ENCODE measurements at regions of chr6 and their contacts with region 1.

Region 1: DNA sequence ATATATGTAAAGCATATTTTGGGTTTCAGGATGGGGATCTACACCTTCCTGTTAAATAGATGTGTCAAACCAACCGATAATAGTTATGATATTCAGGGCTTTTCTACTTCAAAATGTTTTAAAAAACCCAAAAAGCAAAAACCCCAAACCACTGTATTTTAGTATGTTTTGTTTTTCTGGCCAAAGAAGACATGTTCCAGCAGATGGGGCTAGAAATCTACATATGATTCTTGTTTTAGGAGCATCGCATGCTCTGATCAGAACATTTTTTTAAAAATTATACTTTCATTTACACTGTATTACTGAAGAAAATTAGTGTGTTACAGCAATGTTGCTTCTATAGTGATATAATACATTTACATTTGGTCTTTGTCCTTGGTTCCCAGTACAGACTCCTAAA is 11.0 kb downstream of the RMND1 start:
- DNase-seq: peak; percentile 61 to 78 (median 76)
- H3K4me3 ChIP-seq: no peak overlapping the region
- H3K27ac ChIP-seq: no peak overlapping the region
- H3K4me1 ChIP-seq: peaks cover 0 to 4% (median 0%) of the 10 kb centered on the region in 4 experiments
- H3K27me3 ChIP-seq: no peaks in the 10 kb centered on the region

Region 2: GRCh38 chr6:151323791-151324487 is 117.0 kb before region 1 on chr6:
- CTCF ChIA-PET with region 1: no interaction called
- POLR2A ChIA-PET with region 1: no interaction called
- DNase-seq: peak; percentile 47 to 71 (median 68)
- H3K4me3 ChIP-seq: peak overlapping the region in 1 of 7 experiments; percentile 42
- H3K27ac ChIP-seq: no peak overlapping the region
- H3K4me1 ChIP-seq: peaks cover 0 to 15% (median 7%) of the 10 kb centered on the region in 4 experiments
- H3K27me3 ChIP-seq: peaks cover 4 to 34% (median 13%) of the 10 kb centered on the region in 5 experiments

Region 3: GRCh38 chr6:151409260-151409659 is 31.7 kb before region 1 on chr6:
- CTCF ChIA-PET with region 1: interaction called, 10 read pairs
- POLR2A ChIA-PET with region 1: no interaction called
- DNase-seq: no peak
- H3K4me3 ChIP-seq: no peak overlapping the region
- H3K27ac ChIP-seq: no peak overlapping the region
- H3K4me1 ChIP-seq: no peaks in the 10 kb centered on the region
- H3K27me3 ChIP-seq: no peaks in the 10 kb centered on the region

Region 4: DNA sequence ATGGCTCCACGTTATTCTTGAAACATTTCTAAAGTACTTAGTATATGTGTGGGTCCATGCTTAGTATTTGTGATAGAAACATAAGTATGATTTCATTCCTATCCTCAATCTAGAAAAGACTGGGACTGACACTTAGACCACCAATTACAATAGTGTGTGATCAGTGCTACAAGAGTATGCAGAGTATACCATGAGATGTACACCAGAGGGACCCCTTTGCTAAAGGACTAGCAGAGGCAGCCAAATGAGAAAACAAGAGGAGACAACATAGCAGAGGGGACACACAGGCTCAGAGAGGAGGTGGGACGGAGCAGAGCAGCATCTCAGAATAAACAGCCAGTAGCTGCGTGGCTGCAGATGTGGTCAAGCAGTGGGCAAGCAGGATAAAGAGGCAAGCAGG is 10.0 kb before region 1 on chr6:
- CTCF ChIA-PET with region 1: interaction called, 13 read pairs
- POLR2A ChIA-PET with region 1: no interaction called
- DNase-seq: no peak
- H3K4me3 ChIP-seq: no peak overlapping the region
- H3K27ac ChIP-seq: no peak overlapping the region
- H3K4me1 ChIP-seq: no peaks in the 10 kb centered on the region
- H3K27me3 ChIP-seq: no peaks in the 10 kb centered on the region

Region 5: GRCh38 chr6:151451950-151452749 is 11.2 kb after region 1 on chr6 and contains the start of gene RMND1:
- CTCF ChIA-PET with region 1: interaction called, 15 read pairs
- POLR2A ChIA-PET with region 1: interaction called, 4 read pairs
- DNase-seq: peak; percentile 100
- H3K4me3 ChIP-seq: peak within 1 kb of the TSS; percentile 85 to 99 (median 92)
- H3K27ac ChIP-seq: peak within 1 kb of the TSS; percentile 61 to 83
- H3K4me1 ChIP-seq: peaks cover 11 to 23% (median 17%) of the 10 kb centered on the region in 4 experiments
- H3K27me3 ChIP-seq: no peaks in the 10 kb centered on the region

Region 6: DNA sequence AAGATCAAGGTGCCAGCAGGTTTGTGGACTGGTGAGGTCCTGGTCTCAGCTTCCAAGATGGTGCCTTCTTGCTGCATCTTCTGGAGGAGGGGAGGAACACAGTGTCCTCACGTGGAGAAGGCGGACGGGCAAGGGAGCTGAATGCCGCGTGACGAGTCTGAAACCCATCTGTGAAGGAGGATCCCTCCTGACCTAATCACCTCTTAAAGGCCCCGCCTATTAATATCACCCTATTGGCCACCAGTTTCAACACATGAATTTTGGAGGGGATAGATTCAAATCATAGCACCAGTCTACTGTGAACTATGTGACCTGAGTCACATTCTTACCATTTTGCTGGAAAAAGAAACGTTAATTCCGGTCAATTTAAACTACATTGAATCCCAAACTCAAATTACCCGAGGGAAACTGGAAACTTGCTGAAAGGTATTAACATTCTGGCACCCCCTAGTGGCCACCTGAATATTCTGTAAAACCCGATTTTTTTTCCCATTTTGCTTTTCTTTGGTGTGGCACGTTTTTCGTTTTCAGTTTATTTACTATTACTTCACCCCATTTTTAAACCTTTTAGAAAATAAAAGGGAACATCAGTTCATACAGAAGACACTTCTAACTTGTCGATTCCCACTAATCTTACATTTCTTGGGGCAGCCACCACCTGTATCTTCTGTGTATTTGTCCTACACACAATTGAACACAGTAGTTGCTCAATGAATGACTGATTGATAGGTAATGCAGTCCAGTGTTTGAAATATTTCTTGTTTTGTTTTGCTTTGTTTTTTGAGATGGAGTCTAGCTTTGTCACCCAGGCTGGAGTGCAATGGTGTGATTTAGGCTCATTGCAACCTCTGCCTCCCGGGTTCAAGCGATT is 35.0 kb after region 1 on chr6:
- CTCF ChIA-PET with region 1: interaction called, 41 read pairs
- POLR2A ChIA-PET with region 1: no interaction called
- DNase-seq: peak; percentile 55 to 71 (median 56)
- H3K4me3 ChIP-seq: peak overlapping the region in 2 of 7 experiments; percentile 19 to 59
- H3K27ac ChIP-seq: no peak overlapping the region
- H3K4me1 ChIP-seq: peaks cover 0 to 4% (median 3%) of the 10 kb centered on the region in 4 experiments
- H3K27me3 ChIP-seq: no peaks in the 10 kb centered on the region

Region 7: GRCh38 chr6:151765444-151765886 is 324.5 kb after region 1 on chr6:
- CTCF ChIA-PET with region 1: interaction called, 10 read pairs
- POLR2A ChIA-PET with region 1: no interaction called
- DNase-seq: peak; percentile 57 to 75 (median 72)
- H3K4me3 ChIP-seq: no peak overlapping the region
- H3K27ac ChIP-seq: no peak overlapping the region
- H3K4me1 ChIP-seq: peaks cover 0 to 7% (median 4%) of the 10 kb centered on the region in 4 experiments
- H3K27me3 ChIP-seq: no peaks in the 10 kb centered on the region

Region 8: DNA sequence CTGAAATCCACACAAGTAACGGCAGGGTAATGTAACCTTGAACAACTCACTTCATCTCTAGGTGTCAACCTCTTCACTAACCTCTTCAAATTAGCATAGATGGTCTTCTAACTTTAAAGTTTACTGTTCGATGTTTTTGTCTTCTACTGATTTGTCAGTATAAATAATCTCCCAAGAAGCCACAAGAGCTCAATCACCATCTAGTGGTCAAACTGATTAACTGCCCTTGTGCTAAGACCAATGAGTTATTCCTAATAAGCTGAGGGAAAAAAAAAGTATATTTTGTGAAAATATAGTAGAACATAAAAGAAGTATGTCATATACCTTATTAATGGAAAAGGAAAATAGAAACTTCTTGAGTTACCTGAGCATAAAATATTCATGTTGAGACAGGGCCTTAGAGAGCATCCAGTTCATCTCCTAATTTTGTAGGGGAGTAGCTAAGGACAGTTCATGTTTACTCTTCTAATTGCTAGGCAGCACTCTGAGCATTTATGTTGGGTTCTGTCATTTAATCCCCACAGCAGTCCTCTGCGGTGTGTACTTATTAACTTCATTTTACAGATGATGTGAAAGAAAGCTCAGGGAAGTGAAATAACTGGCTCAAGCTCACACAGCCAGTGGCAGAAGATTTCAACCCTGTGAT is 683.6 kb after region 1 on chr6:
- CTCF ChIA-PET with region 1: interaction called, 27 read pairs
- POLR2A ChIA-PET with region 1: no interaction called
- DNase-seq: peak; percentile 50 to 69 (median 68)
- H3K4me3 ChIP-seq: no peak overlapping the region
- H3K27ac ChIP-seq: no peak overlapping the region
- H3K4me1 ChIP-seq: no peaks in the 10 kb centered on the region
- H3K27me3 ChIP-seq: no peaks in the 10 kb centered on the region